Naive thymus-derived CD4-positive, alpha-beta T cell (primary cell): ENCODE measurements at regions of chr1 and their contacts with region 1.

Region 1: DNA sequence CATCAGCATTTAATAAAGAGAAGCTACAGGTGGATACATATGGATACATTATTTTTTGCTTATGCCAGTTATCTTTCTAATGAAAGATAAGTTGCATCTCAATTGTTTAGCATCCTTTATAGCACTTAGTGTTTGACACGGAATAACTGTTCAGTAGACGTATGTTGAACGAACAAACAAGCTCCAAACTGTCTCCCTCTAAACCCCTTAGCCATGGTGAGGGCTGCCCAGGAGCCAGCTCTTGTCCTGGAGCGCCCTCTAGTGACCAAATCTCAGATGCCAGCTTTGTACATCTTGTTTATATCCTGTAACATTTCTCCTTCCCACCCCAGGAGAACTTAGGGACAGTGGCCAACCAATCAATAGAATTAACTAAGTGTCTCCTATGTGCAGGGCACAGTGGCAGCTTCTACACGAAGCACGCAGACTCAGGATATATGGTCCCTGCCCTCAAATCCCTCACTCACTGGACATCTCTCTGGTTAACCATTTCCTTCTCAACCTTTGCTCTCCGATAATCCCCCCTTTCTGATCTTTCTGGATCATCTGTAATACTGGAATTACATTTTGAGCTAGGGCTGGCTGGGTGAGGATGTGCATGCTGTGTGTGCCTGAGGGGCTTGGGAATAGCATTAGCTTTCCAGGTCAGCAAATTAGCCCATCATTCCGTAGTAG is 22.9 kb downstream of the KCNA10 start:
- DNase-seq: peak; percentile 48 to 76 (median 64)
- ATAC-seq: peak; percentile 88
- H3K4me3 ChIP-seq: no peak overlapping the region
- H3K4me3 Mint-ChIP-seq: no peak overlapping the region
- H3K27ac ChIP-seq: no peak overlapping the region
- H3K27ac Mint-ChIP-seq: no peak overlapping the region
- H3K4me1 ChIP-seq: no peaks in the 10 kb centered on the region
- H3K4me1 Mint-ChIP-seq: peaks cover 0 to 6% (median 0%) of the 10 kb centered on the region in 7 donors
- H3K27me3 ChIP-seq: no peaks in the 10 kb centered on the region
- H3K27me3 Mint-ChIP-seq: no peaks in the 10 kb centered on the region

Region 2: GRCh38 chr1:108780937-108781574 is 1715.0 kb before region 1 on chr1:
- CTCF ChIA-PET with region 1: no interaction called
- POLR2A ChIA-PET with region 1: no interaction called
- intact Hi-C with region 1: no loop called
- DNase-seq: no peak
- ATAC-seq: no peak
- H3K4me3 ChIP-seq: no peak overlapping the region
- H3K4me3 Mint-ChIP-seq: no peak overlapping the region
- H3K27ac ChIP-seq: no peak overlapping the region
- H3K27ac Mint-ChIP-seq: no peak overlapping the region
- H3K4me1 ChIP-seq: no peaks in the 10 kb centered on the region
- H3K4me1 Mint-ChIP-seq: peaks cover 0 to 4% (median 0%) of the 10 kb centered on the region in 7 donors
- H3K27me3 ChIP-seq: no peaks in the 10 kb centered on the region
- H3K27me3 Mint-ChIP-seq: no peaks in the 10 kb centered on the region

Region 3: DNA sequence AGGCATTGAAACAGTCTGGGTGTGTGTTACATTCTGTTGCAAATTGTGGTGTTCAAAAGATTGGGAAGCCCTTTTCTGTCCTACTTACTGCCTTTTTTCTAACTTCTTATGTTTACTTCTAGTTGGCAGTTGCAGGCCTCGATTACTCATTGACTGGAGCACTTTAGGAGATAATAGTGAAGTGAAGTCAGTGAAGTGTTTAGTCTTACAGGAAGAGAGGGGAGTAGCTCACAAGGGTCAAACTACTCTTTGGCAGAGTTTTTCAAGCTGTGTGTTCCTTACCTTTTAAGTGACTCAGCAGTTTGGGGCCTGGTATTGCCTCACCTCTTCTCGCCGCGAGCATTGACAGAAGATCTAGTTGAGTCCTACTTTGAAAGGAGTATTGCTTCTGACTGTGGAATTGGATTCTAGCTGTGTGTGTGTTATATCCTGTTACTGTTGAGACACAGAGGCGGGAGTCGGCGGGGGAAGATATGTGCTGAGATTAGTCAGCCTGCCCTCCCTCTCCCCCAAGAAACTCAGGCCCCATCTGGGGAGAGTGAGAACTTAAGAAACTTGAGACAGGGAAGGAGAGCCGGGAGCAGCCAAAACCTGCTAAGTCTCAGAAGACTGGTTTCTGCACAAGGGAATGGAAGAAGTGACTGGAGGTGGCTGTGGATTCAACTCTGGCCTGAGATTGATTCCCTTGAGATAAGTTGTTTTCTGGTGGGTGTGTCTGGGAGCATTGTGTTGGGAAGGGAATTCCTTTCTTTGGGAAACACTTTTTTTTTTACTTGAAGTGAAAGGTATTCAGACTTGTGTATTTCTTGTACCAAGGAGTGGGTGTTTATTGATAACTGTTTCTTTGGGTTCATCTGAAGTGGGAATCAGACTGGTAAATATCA is 492.1 kb before region 1 on chr1:
- CTCF ChIA-PET with region 1: no interaction called
- POLR2A ChIA-PET with region 1: no interaction called
- intact Hi-C with region 1: no loop called
- DNase-seq: peak in 4 of 9 donors; percentile 0 to 45 (median 15)
- ATAC-seq: peak; percentile 54
- H3K4me3 ChIP-seq: no peak overlapping the region
- H3K4me3 Mint-ChIP-seq: peak overlapping the region; percentile 34 to 81 (median 66)
- H3K27ac ChIP-seq: no peak overlapping the region
- H3K27ac Mint-ChIP-seq: peak overlapping the region; percentile 9 to 87 (median 58)
- H3K4me1 ChIP-seq: peaks cover 5 to 20% of the 10 kb centered on the region in 2 donors
- H3K4me1 Mint-ChIP-seq: peaks cover 17 to 38% (median 28%) of the 10 kb centered on the region in 7 donors
- H3K27me3 ChIP-seq: no peaks in the 10 kb centered on the region
- H3K27me3 Mint-ChIP-seq: no peaks in the 10 kb centered on the region

Region 4: GRCh38 chr1:110053557-110054428 is 442.3 kb before region 1 on chr1:
- CTCF ChIA-PET with region 1: interaction called, 3 read pairs
- POLR2A ChIA-PET with region 1: no interaction called
- intact Hi-C with region 1: loop called in 1 of 2 experiments (anchors 1 kb)
- DNase-seq: peak; percentile 24 to 76 (median 58)
- ATAC-seq: peak; percentile 87
- H3K4me3 ChIP-seq: no peak overlapping the region
- H3K4me3 Mint-ChIP-seq: no peak overlapping the region
- H3K27ac ChIP-seq: no peak overlapping the region
- H3K27ac Mint-ChIP-seq: peak overlapping the region in 1 of 9 donors; percentile 43
- H3K4me1 ChIP-seq: no peaks in the 10 kb centered on the region
- H3K4me1 Mint-ChIP-seq: peaks cover 0 to 11% (median under 1%) of the 10 kb centered on the region in 7 donors
- H3K27me3 ChIP-seq: no peaks in the 10 kb centered on the region
- H3K27me3 Mint-ChIP-seq: no peaks in the 10 kb centered on the region

Region 5: DNA sequence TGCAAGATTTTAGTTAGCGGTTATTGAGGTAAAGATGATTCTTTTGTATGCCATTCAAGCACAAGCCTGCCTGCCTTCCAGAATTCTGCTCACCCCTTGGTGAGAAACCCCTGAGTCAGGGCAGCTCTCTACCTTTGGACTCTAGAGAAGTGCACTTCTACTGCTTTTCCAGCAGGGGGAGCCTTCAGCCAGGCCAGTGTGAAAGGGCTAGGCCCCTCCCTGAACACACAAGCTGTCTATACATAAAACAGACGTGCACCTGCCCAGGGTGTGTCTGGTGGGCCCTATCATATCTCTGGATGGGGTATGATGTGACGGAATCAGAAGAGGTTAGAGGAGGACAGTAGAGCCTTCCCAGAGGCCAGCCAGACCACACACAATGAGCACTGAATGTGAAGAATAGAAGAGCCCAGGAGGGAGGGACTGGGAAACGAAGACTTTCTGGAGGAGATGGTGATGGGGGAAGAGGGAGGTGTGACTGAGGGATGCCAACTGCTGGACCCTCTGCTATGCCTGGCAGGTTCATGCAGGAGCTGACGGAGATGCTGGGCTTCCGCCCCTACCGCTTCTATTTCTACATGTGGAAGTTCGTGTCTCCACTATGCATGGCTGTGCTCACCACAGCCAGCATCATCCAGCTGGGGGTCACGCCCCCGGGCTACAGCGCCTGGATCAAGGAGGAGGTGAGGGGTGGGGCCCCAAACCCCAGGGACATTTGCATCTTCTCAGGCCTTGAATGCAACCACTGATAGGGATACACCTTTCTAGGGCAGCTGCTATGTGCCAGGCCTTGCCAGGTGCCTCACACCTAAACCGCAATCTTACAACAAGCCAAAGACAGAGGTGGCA is 298.9 kb before region 1 on chr1:
- CTCF ChIA-PET with region 1: interaction called, 42 read pairs
- POLR2A ChIA-PET with region 1: no interaction called
- intact Hi-C with region 1: loop called in 1 of 2 experiments (anchors 1 kb)
- DNase-seq: peak; percentile 34 to 77 (median 57)
- ATAC-seq: peak; percentile 91
- H3K4me3 ChIP-seq: no peak overlapping the region
- H3K4me3 Mint-ChIP-seq: no peak overlapping the region
- H3K27ac ChIP-seq: no peak overlapping the region
- H3K27ac Mint-ChIP-seq: no peak overlapping the region
- H3K4me1 ChIP-seq: no peaks in the 10 kb centered on the region
- H3K4me1 Mint-ChIP-seq: peaks cover 0 to 6% (median 0%) of the 10 kb centered on the region in 7 donors
- H3K27me3 ChIP-seq: no peaks in the 10 kb centered on the region
- H3K27me3 Mint-ChIP-seq: no peaks in the 10 kb centered on the region

Region 6: DNA sequence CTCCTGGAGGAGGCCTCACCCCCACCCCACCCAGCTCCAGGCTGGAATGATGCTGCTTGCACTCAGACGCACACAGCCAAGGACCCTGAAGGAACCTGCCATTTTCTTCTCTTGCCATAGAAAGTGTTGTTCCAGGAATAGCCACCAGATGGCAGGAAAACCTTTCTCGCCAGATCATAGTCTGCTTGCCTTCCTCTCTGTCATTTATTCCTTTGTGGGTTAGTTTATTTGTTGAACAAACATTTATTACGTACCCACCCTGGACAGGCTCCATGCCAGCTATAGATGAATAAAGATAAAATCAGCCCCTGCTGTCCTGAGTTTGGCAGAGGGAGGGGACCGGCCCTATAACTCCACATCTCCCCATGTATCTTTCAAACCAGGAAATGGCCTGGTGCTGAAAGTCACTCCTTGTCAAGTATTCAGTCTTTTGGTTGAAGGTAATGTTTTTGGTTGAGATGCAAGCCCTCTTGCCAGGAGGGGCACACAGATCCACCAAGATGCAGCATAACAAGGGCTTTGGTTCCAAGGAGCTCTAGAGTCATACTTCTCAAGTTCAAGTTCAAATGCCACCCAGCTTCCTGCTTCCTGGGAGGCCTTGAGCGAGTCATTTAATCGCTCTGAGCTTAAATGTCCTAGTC is 292.9 kb before region 1 on chr1:
- CTCF ChIA-PET with region 1: interaction called, 42 read pairs
- POLR2A ChIA-PET with region 1: no interaction called
- intact Hi-C with region 1: loop called (anchors 1 kb)
- DNase-seq: peak; percentile 31 to 83 (median 74)
- ATAC-seq: peak; percentile 71
- H3K4me3 ChIP-seq: no peak overlapping the region
- H3K4me3 Mint-ChIP-seq: peak overlapping the region in 5 of 10 donors; percentile 1 to 26 (median 18)
- H3K27ac ChIP-seq: no peak overlapping the region
- H3K27ac Mint-ChIP-seq: peak overlapping the region; percentile 53 to 92 (median 87)
- H3K4me1 ChIP-seq: peaks cover 8 to 20% of the 10 kb centered on the region in 2 donors
- H3K4me1 Mint-ChIP-seq: peaks cover 13 to 32% (median 23%) of the 10 kb centered on the region in 7 donors
- H3K27me3 ChIP-seq: no peaks in the 10 kb centered on the region
- H3K27me3 Mint-ChIP-seq: no peaks in the 10 kb centered on the region

Region 7: GRCh38 chr1:110412576-110412975 is 83.5 kb before region 1 on chr1:
- CTCF ChIA-PET with region 1: interaction called, 12 read pairs
- POLR2A ChIA-PET with region 1: no interaction called
- intact Hi-C with region 1: loop called (anchors 1 kb)
- DNase-seq: peak; percentile 22 to 59 (median 51)
- ATAC-seq: peak; percentile 71
- H3K4me3 ChIP-seq: no peak overlapping the region
- H3K4me3 Mint-ChIP-seq: no peak overlapping the region
- H3K27ac ChIP-seq: no peak overlapping the region
- H3K27ac Mint-ChIP-seq: peak overlapping the region in 2 of 9 donors; percentile 15 to 77
- H3K4me1 ChIP-seq: peaks cover 7 to 13% of the 10 kb centered on the region in 2 donors
- H3K4me1 Mint-ChIP-seq: peaks cover 9 to 22% (median 18%) of the 10 kb centered on the region in 7 donors
- H3K27me3 ChIP-seq: no peaks in the 10 kb centered on the region
- H3K27me3 Mint-ChIP-seq: no peaks in the 10 kb centered on the region